Activated CD4-positive, alpha-beta T cell treated with anti-CD3 and anti-CD28 coated beads for 36 hours (primary cell): ENCODE measurements at regions of chr6 and their contacts with region 1.

Region 1: DNA sequence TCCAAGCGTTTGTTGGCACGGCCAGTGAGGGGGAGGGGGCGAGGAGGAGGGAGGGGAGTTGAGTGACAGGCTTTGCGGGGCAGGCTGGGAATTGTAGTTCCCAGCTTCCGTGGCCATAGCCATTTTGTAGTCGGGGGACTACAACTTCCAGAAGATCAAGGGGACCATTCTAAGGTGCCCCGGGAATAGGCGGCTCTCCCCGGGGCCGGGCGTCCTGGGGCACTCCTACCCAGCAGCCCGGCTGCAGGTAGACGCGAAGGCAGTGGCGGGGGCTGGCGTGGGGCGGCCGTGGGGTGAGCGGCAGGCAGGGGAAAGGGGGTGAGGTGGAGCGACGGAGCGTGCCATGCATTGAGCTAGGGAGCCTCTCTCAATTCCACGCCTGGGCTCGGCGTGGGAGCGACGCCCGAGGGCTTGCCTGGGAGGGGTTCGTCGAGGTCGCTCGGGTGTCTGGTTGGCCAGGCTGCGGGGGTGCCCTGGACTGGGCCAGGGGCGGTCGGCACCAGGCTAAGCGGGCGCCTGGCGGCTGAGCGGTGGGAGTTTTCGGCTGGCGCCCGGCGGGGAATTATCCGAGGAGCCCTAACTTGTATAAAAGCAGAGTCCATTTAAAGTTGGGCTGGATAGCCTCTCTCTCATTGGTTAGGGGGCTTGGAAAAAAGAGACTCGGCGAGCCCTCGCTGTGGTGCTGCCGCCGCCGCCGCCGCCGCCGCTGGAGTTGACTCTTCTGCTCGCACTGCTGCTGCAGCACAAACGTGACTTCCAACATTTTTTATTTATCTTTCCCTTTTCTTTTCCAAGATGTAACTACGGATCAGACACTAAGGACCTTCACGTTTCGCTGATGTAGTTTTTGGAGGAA is at the start of gene JARID2:
- DNase-seq: peak; percentile 99
- ATAC-seq: peak; percentile 60
- H3K4me3 Mint-ChIP-seq: peak within 1 kb of the TSS; percentile 92
- H3K27ac Mint-ChIP-seq: peak within 1 kb of the TSS; percentile 99
- H3K4me1 Mint-ChIP-seq: peaks cover 22% of the 10 kb centered on the region
- H3K27me3 Mint-ChIP-seq: no peaks in the 10 kb centered on the region
- total RNA-seq, gene JARID2: 43.0 to 48.6 TPM

Region 2: GRCh38 chr6:14117158-14118090 is 1128.2 kb before region 1 on chr6 and contains the start of gene CD83:
- CTCF ChIA-PET with region 1: no interaction called
- POLR2A ChIA-PET with region 1: no interaction called
- intact Hi-C with region 1: loop called (anchors 5 to 10 kb)
- DNase-seq: peak; percentile 86
- ATAC-seq: peak; percentile 83
- H3K4me3 Mint-ChIP-seq: peak within 1 kb of the TSS; percentile 99
- H3K27ac Mint-ChIP-seq: peak within 1 kb of the TSS; percentile 94
- H3K4me1 Mint-ChIP-seq: peaks cover 43% of the 10 kb centered on the region
- H3K27me3 Mint-ChIP-seq: no peaks in the 10 kb centered on the region
- total RNA-seq, gene CD83: 22.0 to 22.9 TPM

Region 3: GRCh38 chr6:14542670-14543366 is 702.8 kb before region 1 on chr6:
- CTCF ChIA-PET with region 1: no interaction called
- POLR2A ChIA-PET with region 1: no interaction called
- intact Hi-C with region 1: loop called in 1 of 2 experiments (anchors 5 kb)
- DNase-seq: peak; percentile 90
- ATAC-seq: peak; percentile 99
- H3K4me3 Mint-ChIP-seq: no peak overlapping the region
- H3K27ac Mint-ChIP-seq: peak overlapping the region; percentile 79
- H3K4me1 Mint-ChIP-seq: peaks cover 41% of the 10 kb centered on the region
- H3K27me3 Mint-ChIP-seq: peaks cover 2% of the 10 kb centered on the region

Region 4: GRCh38 chr6:14824484-14825275 is 420.9 kb before region 1 on chr6:
- CTCF ChIA-PET with region 1: no interaction called
- POLR2A ChIA-PET with region 1: no interaction called
- intact Hi-C with region 1: loop called in 1 of 2 experiments (anchors 5 kb)
- DNase-seq: no peak
- ATAC-seq: no peak
- H3K4me3 Mint-ChIP-seq: no peak overlapping the region
- H3K27ac Mint-ChIP-seq: no peak overlapping the region
- H3K4me1 Mint-ChIP-seq: peaks cover 24% of the 10 kb centered on the region
- H3K27me3 Mint-ChIP-seq: no peaks in the 10 kb centered on the region

Region 5: DNA sequence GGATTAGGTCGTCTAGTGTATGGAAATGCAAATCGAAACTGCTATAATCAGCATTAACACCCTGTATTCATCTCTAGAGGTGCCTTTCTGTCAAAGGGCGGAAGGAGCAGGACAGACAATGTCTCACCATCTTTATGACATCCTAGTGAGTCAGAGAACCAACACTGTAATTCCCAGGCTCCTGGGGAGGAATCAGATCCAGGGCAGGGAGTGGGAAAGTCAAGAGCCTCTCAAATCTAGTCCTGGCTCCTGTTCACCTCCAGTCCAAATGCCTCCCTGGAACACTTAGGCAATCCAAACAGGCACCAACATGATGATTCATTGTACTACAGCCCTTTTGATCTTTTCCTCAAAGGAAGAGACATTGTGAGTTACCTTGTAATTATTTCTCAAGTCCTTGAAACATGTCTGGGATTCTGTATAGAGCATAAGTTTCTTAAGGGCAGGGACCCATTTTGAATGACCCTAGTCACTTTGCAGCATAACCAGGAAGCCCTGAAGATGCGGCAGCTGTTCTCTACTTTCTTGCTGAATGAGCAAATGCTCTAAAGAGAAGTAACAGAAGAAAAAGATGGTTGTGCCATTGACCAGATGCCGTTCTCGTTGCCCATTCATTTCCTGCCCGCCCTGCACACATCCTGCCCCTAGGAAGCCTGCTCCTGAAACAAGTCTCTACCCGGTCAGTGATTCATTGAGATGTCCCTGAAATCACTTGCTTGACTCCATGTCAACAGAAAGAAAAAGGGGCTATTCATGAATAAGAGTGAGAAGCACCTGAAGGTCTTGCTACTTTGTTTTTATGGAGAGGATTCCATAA is 112.5 kb before region 1 on chr6:
- CTCF ChIA-PET with region 1: interaction called, 3 read pairs
- POLR2A ChIA-PET with region 1: interaction called, 4 read pairs
- intact Hi-C with region 1: loop called in 1 of 2 experiments (anchors 5 kb)
- DNase-seq: no peak
- ATAC-seq: peak; percentile 62
- H3K4me3 Mint-ChIP-seq: no peak overlapping the region
- H3K27ac Mint-ChIP-seq: no peak overlapping the region
- H3K4me1 Mint-ChIP-seq: peaks cover 36% of the 10 kb centered on the region
- H3K27me3 Mint-ChIP-seq: no peaks in the 10 kb centered on the region

Region 6: DNA sequence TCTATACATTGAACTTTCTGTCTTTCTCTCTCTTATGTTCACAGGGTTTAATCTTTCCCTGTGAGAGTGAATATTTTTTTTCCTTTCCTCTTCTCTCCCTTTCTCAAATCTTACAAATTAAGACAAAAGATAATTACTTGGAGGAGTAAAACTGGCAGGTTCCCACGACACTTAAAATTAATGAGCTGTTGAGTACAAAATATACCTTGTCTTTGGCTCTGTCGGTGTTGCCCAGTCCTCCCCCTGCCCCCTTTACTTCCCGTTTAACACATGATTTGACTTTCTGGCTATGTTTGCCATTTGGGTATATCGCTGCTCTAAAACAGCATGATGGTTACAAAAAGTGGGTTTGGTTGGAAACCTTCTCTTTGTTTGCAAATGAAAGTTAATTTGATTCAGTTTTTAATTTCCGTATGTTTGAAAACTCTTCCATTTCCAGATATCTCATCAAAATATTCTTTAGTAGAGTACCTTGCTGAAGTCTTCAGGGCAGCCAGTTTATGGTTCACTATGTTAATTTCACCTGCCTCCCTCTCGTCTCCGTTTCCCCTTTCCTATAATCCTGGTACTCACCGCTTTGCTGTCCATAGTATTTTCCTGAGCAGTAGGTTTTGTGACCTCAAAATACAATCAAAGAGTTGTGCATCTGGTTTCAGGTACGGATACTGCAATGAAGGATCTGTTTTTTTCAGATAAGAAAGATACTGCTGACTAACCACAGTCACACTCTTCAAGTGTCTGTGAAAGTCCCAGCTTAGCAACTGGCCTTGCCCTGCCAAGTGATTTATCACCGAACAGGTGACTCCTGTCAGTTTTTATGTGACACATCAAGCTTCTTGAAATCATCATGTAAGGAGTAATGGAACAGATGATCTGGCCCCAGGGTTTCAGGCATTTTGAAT is 236.1 kb after region 1 on chr6:
- CTCF ChIA-PET with region 1: no interaction called
- POLR2A ChIA-PET with region 1: no interaction called
- intact Hi-C with region 1: loop called in 1 of 2 experiments (anchors 2 kb)
- DNase-seq: peak; percentile 64
- ATAC-seq: peak; percentile 91
- H3K4me3 Mint-ChIP-seq: peak overlapping the region; percentile 4
- H3K27ac Mint-ChIP-seq: peak overlapping the region; percentile 27
- H3K4me1 Mint-ChIP-seq: peaks cover 64% of the 10 kb centered on the region
- H3K27me3 Mint-ChIP-seq: no peaks in the 10 kb centered on the region

Region 7: DNA sequence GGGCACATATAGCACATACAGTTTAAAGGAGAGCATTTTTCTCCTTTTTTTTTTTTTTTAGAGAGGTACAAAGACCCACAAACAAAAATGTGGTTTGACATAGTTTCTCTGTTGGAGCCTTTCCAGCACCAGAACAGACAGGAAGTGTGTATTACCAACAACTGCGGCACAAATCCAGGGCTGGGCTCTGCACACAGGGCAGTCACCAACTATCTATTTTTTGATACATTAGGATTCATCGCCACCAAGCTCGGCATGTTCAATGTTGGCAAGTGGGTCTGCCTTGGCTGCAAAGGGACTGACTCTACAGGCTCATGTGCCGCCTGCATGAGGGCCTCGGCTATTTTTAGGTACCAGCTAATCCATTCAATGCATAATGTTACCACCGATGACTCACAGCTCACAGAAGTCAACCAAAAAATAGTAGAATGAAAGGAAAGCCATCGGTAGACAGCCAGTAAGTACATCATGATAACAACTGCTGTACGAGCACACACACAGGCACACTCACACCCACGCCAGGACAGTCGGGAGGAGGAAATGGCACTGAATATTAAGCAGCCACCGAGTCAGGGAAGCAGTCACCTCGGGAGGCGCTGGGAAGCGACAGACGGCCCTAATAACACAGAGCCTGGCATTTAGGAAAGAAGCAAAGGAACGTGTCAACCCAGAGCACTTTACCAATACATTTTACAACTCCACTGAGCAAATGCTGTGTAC is 1074.4 kb after region 1 on chr6:
- CTCF ChIA-PET with region 1: no interaction called
- POLR2A ChIA-PET with region 1: no interaction called
- intact Hi-C with region 1: loop called in 1 of 2 experiments (anchors 5 kb)
- DNase-seq: peak; percentile 80
- ATAC-seq: peak; percentile 62
- H3K4me3 Mint-ChIP-seq: peak overlapping the region; percentile 67
- H3K27ac Mint-ChIP-seq: peak overlapping the region; percentile 93
- H3K4me1 Mint-ChIP-seq: peaks cover 76% of the 10 kb centered on the region
- H3K27me3 Mint-ChIP-seq: no peaks in the 10 kb centered on the region